ENCODE measurements at regions of chr3 and their contacts with region 1.

Region 1: GRCh38 chr3:48151058-48151806 is 37.0 kb downstream of the CDC25A start:
- DNase-seq: peak; percentile 77 to 90
- H3K4me3 ChIP-seq: no peak overlapping the region
- H3K27ac ChIP-seq: no peak overlapping the region
- H3K4me1 ChIP-seq: no peaks in the 10 kb centered on the region; a peak in 1 of 7 replicates
- H3K27me3 ChIP-seq: no peaks in the 10 kb centered on the region
- CTCF ChIP-seq: peak; percentile 93 to 96 (median 95)
- EP300 ChIP-seq: no peak
- POLR2A ChIP-seq: no peak
- RAD21 ChIP-seq: peak; percentile 100

Region 2: GRCh38 chr3:47836986-47837385 is 314.2 kb before region 1 on chr3:
- CTCF ChIA-PET with region 1: interaction called, 36 read pairs
- POLR2A ChIA-PET with region 1: interaction called, 3 read pairs
- DNase-seq: no peak
- H3K4me3 ChIP-seq: no peak overlapping the region
- H3K27ac ChIP-seq: no peak overlapping the region
- H3K4me1 ChIP-seq: peaks cover 11 to 17% (median 13%) of the 10 kb centered on the region in 4 experiments
- H3K27me3 ChIP-seq: no peaks in the 10 kb centered on the region
- CTCF ChIP-seq: no peak
- EP300 ChIP-seq: no peak
- POLR2A ChIP-seq: no peak
- RAD21 ChIP-seq: no peak

Region 3: DNA sequence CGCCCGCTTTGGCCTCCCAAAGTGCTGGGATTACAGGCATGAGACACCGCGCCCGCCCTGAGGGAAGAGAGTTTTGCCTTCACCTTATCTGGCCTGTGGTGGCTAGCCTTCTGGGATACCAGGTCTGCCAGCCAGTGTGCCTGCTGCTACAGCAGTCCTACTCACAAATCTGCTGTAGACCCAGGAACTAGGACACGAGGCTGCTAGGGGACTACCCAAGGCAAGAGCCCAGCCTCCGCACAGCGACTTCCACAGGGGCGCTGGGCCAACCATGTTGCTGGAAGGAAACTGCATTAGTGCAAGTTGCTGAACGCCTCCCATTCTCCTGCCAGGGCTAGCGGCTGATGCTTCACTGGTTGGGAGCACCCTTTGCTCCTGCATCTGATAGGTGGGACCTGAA is 294.6 kb before region 1 on chr3:
- CTCF ChIA-PET with region 1: interaction called, 28 read pairs
- POLR2A ChIA-PET with region 1: interaction called, 10 read pairs
- DNase-seq: no peak
- H3K4me3 ChIP-seq: no peak overlapping the region
- H3K27ac ChIP-seq: no peak overlapping the region
- H3K4me1 ChIP-seq: no peaks in the 10 kb centered on the region
- H3K27me3 ChIP-seq: no peaks in the 10 kb centered on the region
- CTCF ChIP-seq: no peak
- EP300 ChIP-seq: no peak
- POLR2A ChIP-seq: no peak
- RAD21 ChIP-seq: no peak

Region 4: DNA sequence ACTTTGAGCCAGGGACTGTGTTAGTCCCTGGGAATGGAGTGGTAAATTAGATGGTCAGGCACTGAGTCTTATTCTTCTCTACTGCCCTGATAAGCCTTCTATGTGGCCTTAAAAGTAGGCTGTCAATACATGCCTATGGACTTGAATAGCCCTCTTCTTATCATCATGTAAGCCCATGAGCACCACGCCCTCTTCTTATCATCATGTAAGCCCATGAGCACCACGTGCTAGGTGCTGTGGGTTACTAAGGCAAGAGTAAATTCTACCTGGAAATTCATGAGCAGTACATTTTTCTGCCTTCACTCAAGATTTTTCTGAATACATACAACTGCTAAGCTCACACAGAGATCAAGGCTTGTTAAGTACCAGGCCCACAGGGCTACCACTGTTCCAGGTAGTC is 279.8 kb before region 1 on chr3:
- CTCF ChIA-PET with region 1: interaction called, 14 read pairs
- POLR2A ChIA-PET with region 1: no interaction called
- DNase-seq: no peak
- H3K4me3 ChIP-seq: no peak overlapping the region
- H3K27ac ChIP-seq: no peak overlapping the region
- H3K4me1 ChIP-seq: peaks cover 0 to 3% (median 0%) of the 10 kb centered on the region in 4 experiments; a peak in 2 of 7 replicates
- H3K27me3 ChIP-seq: no peaks in the 10 kb centered on the region
- CTCF ChIP-seq: no peak
- EP300 ChIP-seq: no peak
- POLR2A ChIP-seq: no peak
- RAD21 ChIP-seq: no peak

Region 5: GRCh38 chr3:48088749-48089466 is 62.3 kb before region 1 on chr3:
- CTCF ChIA-PET with region 1: interaction called, 11 read pairs
- POLR2A ChIA-PET with region 1: interaction called, 5 read pairs
- DNase-seq: peak; percentile 91 to 94
- H3K4me3 ChIP-seq: peak overlapping the region; percentile 71 to 99 (median 82)
- H3K27ac ChIP-seq: peak overlapping the region; percentile 98
- H3K4me1 ChIP-seq: peaks cover 0 to 5% (median 0%) of the 10 kb centered on the region in 4 experiments; a peak in 2 of 7 replicates
- H3K27me3 ChIP-seq: no peaks in the 10 kb centered on the region
- CTCF ChIP-seq: peak in 2 of 3 experiments; percentile 1 to 24; a peak in 2 of 4 replicates
- EP300 ChIP-seq: no peak
- POLR2A ChIP-seq: peak; percentile 91 to 98
- RAD21 ChIP-seq: peak; percentile 25 to 44; a peak in 3 of 4 replicates

Region 6: GRCh38 chr3:48135552-48136495 is 15.4 kb before region 1 on chr3:
- CTCF ChIA-PET with region 1: interaction called, 68 read pairs
- POLR2A ChIA-PET with region 1: interaction called, 7 read pairs
- DNase-seq: no peak
- H3K4me3 ChIP-seq: no peak overlapping the region
- H3K27ac ChIP-seq: no peak overlapping the region
- H3K4me1 ChIP-seq: peaks cover 0 to 4% (median 3%) of the 10 kb centered on the region in 4 experiments; a peak in 3 of 7 replicates
- H3K27me3 ChIP-seq: no peaks in the 10 kb centered on the region
- CTCF ChIP-seq: no peak
- EP300 ChIP-seq: no peak
- POLR2A ChIP-seq: no peak
- RAD21 ChIP-seq: no peak

Measured in H1 (cell line).